Mammary epithelial cell (primary cell): ENCODE measurements at regions of chr12 and their contacts with region 1.

Region 1: GRCh38 chr12:93378373-93379325 is 924 bp downstream of the NUDT4 start:
- DNase-seq: peak; percentile 66
- H3K4me3 ChIP-seq: peak overlapping the region; percentile 67 to 93 (median 87)
- H3K27ac ChIP-seq: peak overlapping the region; percentile 77
- H3K4me1 ChIP-seq: peaks cover 25% of the 10 kb centered on the region
- H3K27me3 ChIP-seq: no peaks in the 10 kb centered on the region
- CTCF ChIP-seq: no peak

Region 2: GRCh38 chr12:92784795-92785562 is 593.7 kb before region 1 on chr12:
- CTCF ChIA-PET with region 1: no interaction called
- dilution Hi-C with region 1: no loop called
- in situ Hi-C with region 1: loop called in 1 of 2 experiments (anchors 25 kb)
- intact Hi-C with region 1: loop called (anchors 5 kb)
- DNase-seq: peak; percentile 78
- H3K4me3 ChIP-seq: no peak overlapping the region
- H3K27ac ChIP-seq: peak overlapping the region; percentile 43
- H3K4me1 ChIP-seq: peaks cover 15% of the 10 kb centered on the region
- H3K27me3 ChIP-seq: no peaks in the 10 kb centered on the region
- CTCF ChIP-seq: peak; percentile 58 to 60

Region 3: DNA sequence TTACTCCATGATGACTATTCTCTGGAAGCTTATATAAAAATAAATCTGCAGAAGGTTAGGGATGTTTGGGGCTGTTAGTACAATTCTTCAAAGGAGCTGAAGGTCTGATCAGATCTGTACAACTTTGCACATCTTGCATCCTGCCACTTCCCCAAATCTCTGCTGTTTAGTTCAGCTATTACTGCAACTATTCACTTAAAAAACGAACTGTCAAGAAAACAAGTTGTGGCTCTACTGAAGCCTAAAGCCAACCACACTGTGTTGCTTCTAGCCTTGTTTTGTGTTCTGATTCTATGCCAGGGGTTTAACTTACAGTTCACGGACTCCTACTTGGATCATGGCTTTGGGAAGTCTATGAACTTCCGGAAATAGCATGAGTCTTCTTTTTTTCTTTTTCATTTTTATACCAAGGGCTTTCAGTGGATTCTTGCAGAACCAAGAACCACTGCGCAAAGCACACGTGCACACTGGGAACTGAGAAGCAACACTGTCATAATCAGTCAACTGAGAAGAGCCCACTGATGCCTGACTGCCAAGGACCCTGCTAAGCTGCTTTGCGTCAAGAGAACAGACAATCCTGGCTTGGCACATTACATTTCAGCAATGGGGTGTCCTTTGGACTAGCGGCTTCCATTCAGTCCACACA is 383.3 kb before region 1 on chr12:
- CTCF ChIA-PET with region 1: no interaction called
- dilution Hi-C with region 1: loop called (anchors 10 kb)
- in situ Hi-C with region 1: no loop called
- intact Hi-C with region 1: no loop called
- DNase-seq: no peak
- H3K4me3 ChIP-seq: no peak overlapping the region
- H3K27ac ChIP-seq: no peak overlapping the region
- H3K4me1 ChIP-seq: no peaks in the 10 kb centered on the region
- H3K27me3 ChIP-seq: no peaks in the 10 kb centered on the region
- CTCF ChIP-seq: no peak

Region 4: GRCh38 chr12:93072340-93072739 is 306.3 kb before region 1 on chr12:
- CTCF ChIA-PET with region 1: no interaction called
- dilution Hi-C with region 1: no loop called
- in situ Hi-C with region 1: no loop called
- intact Hi-C with region 1: no loop called
- DNase-seq: no peak
- H3K4me3 ChIP-seq: no peak overlapping the region
- H3K27ac ChIP-seq: no peak overlapping the region
- H3K4me1 ChIP-seq: no peaks in the 10 kb centered on the region
- H3K27me3 ChIP-seq: peaks cover 2% of the 10 kb centered on the region
- CTCF ChIP-seq: no peak

Region 5: DNA sequence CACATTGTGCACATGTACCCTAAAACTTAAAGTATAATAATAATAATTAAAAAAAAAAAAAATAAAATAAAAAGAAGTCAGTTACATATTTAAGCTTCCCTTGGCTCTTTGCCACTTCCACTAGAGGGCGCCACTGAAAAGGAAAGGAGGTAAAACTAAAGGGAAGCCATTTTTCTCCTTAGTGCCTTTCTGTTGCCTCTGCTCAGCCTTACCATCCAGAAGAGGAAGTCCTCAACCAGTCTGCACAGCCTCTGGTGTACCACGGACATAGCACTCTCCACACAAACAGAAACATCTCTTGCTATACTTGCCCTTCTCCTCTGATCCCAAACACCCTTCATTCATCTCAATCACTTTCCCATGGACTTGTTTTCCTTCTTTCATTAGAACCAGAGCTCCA is 280.6 kb before region 1 on chr12:
- CTCF ChIA-PET with region 1: interaction called, 3 read pairs
- dilution Hi-C with region 1: no loop called
- in situ Hi-C with region 1: no loop called
- intact Hi-C with region 1: loop called (anchors 2 kb)
- DNase-seq: no peak
- H3K4me3 ChIP-seq: no peak overlapping the region
- H3K27ac ChIP-seq: no peak overlapping the region
- H3K4me1 ChIP-seq: peaks cover 7% of the 10 kb centered on the region
- H3K27me3 ChIP-seq: no peaks in the 10 kb centered on the region
- CTCF ChIP-seq: peak; percentile 45 to 46

Region 6: GRCh38 chr12:93127582-93128331 is 250.9 kb before region 1 on chr12:
- CTCF ChIA-PET with region 1: no interaction called
- dilution Hi-C with region 1: no loop called
- in situ Hi-C with region 1: loop called in 1 of 2 experiments (anchors 10 kb)
- intact Hi-C with region 1: loop called (anchors 1 kb)
- DNase-seq: peak; percentile 71
- H3K4me3 ChIP-seq: no peak overlapping the region
- H3K27ac ChIP-seq: no peak overlapping the region
- H3K4me1 ChIP-seq: peaks cover 28% of the 10 kb centered on the region
- H3K27me3 ChIP-seq: no peaks in the 10 kb centered on the region
- CTCF ChIP-seq: peak; percentile 50 to 59

Region 7: GRCh38 chr12:93297032-93297431 is 81.6 kb before region 1 on chr12:
- CTCF ChIA-PET with region 1: no interaction called
- dilution Hi-C with region 1: loop called (anchors 10 kb)
- in situ Hi-C with region 1: no loop called
- intact Hi-C with region 1: no loop called
- DNase-seq: no peak
- H3K4me3 ChIP-seq: no peak overlapping the region
- H3K27ac ChIP-seq: no peak overlapping the region
- H3K4me1 ChIP-seq: no peaks in the 10 kb centered on the region
- H3K27me3 ChIP-seq: no peaks in the 10 kb centered on the region
- CTCF ChIP-seq: no peak